ENCODE measurements at regions of chr10 and their contacts with region 1.

Region 1: DNA sequence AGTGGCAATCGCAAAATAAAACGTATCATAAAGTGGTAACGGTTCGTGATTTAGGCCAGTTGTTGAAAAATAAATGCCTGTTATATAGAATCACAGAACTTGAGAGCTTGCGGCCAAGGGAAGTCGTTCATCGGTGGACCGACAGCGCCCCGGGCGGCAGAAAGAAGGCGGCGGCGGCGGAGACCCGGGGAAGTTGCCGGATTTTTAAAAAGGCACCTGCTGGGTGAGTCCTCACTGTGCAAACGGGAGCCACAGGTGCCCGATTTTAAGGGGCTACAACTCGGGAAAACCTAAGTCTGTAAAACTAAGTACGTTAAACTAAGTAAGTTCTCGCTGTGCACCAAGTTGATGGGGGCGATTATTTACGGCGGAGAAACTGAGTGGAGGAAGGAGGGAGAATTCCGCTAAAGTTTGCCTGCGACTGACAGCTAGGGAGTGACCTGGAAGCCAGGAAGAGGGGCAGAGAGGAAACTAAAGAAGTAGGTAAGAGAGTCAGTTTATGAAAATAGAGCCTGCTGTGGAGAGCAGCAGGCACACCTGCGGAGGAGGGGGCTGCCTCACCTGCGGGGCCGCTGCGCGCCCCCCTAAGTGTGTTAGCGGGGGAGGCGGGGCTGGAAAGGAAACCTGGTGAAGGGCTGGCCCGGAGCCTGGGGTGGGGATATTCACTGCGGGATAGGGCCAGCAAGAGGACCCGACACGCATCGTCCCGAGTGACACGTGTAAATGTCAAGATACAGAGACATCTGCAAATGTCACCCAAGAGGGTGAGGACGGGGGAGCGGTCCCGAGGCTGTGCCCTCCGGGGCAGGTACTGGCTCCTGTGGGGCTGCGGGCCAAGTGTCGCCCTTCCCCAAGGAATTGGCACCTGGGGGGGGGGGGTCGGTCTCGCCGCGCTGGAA is 1.0 kb downstream of the ADAM12 start:
- DNase-seq: peak; percentile 73 to 92
- ATAC-seq: peak; percentile 73
- H3K4me3 ChIP-seq: peak overlapping the region; percentile 11 to 46
- H3K27ac ChIP-seq: no peak overlapping the region
- H3K4me1 ChIP-seq: no peaks in the 10 kb centered on the region
- H3K27me3 ChIP-seq: no peaks in the 10 kb centered on the region

Region 2: GRCh38 chr10:125982260-125982948 is 404.9 kb before region 1 on chr10:
- intact Hi-C with region 1: loop called (anchors 2 to 5 kb)
- DNase-seq: no peak
- ATAC-seq: peak; percentile 63
- H3K4me3 ChIP-seq: no peak overlapping the region
- H3K27ac ChIP-seq: no peak overlapping the region
- H3K4me1 ChIP-seq: no peaks in the 10 kb centered on the region
- H3K27me3 ChIP-seq: no peaks in the 10 kb centered on the region

Region 3: GRCh38 chr10:126041781-126042231 is 345.5 kb before region 1 on chr10:
- intact Hi-C with region 1: loop called in 1 of 2 experiments (anchors 10 kb)
- DNase-seq: peak; percentile 90 to 96
- ATAC-seq: peak; percentile 95
- H3K4me3 ChIP-seq: no peak overlapping the region
- H3K27ac ChIP-seq: peak overlapping the region in 1 of 2 donors; percentile 72
- H3K4me1 ChIP-seq: no peaks in the 10 kb centered on the region
- H3K27me3 ChIP-seq: no peaks in the 10 kb centered on the region

Region 4: DNA sequence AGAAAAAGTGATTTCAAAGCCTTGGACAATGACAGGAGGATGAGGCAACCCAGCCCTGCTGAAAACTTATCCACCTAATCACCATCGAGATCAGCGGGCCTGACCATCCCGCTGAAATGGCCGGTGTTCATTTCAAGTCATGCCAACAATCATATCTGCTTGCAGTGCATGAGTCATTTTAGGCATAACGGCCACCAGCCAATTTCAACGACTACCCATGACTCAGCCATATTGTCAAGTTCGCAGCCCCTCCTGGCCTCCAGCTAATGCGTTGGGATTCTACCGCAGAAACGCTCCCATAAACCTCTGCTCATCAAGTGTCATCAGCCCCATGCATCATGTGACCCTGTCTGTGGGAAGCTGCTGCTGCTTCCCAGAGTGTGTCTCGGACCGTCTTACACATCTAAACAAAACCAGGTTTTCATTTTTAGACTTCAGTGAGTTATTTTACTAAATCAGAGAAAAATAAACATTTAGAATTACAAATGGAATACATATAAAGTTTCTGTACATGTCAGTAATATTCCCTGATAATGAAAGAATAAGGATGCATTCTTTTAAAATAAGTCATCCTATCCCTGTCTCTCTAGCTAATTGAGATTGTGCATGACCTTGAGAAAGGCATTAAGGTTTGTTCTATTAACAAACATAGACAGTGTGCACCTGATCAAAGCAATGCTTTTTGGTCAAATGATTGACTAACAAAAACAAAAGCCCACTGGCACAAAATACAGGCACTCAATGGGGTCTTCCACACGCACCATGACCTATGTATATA is 187.9 kb before region 1 on chr10:
- intact Hi-C with region 1: loop called in 1 of 2 experiments (anchors 10 kb)
- DNase-seq: peak in 1 of 2 donors; percentile 62
- ATAC-seq: no peak
- H3K4me3 ChIP-seq: no peak overlapping the region
- H3K27ac ChIP-seq: no peak overlapping the region
- H3K4me1 ChIP-seq: peaks cover 3 to 4% of the 10 kb centered on the region in 2 donors
- H3K27me3 ChIP-seq: no peaks in the 10 kb centered on the region

Region 5: GRCh38 chr10:126349101-126349500 is 38.2 kb before region 1 on chr10:
- intact Hi-C with region 1: no loop called
- DNase-seq: no peak
- ATAC-seq: no peak
- H3K4me3 ChIP-seq: no peak overlapping the region
- H3K27ac ChIP-seq: no peak overlapping the region
- H3K4me1 ChIP-seq: no peaks in the 10 kb centered on the region
- H3K27me3 ChIP-seq: no peaks in the 10 kb centered on the region

Region 6: GRCh38 chr10:126475941-126476645 is 88.8 kb after region 1 on chr10:
- intact Hi-C with region 1: loop called in 1 of 2 experiments (anchors 10 kb)
- DNase-seq: no peak
- ATAC-seq: peak; percentile 67
- H3K4me3 ChIP-seq: no peak overlapping the region
- H3K27ac ChIP-seq: no peak overlapping the region
- H3K4me1 ChIP-seq: no peaks in the 10 kb centered on the region
- H3K27me3 ChIP-seq: no peaks in the 10 kb centered on the region

Region 7: DNA sequence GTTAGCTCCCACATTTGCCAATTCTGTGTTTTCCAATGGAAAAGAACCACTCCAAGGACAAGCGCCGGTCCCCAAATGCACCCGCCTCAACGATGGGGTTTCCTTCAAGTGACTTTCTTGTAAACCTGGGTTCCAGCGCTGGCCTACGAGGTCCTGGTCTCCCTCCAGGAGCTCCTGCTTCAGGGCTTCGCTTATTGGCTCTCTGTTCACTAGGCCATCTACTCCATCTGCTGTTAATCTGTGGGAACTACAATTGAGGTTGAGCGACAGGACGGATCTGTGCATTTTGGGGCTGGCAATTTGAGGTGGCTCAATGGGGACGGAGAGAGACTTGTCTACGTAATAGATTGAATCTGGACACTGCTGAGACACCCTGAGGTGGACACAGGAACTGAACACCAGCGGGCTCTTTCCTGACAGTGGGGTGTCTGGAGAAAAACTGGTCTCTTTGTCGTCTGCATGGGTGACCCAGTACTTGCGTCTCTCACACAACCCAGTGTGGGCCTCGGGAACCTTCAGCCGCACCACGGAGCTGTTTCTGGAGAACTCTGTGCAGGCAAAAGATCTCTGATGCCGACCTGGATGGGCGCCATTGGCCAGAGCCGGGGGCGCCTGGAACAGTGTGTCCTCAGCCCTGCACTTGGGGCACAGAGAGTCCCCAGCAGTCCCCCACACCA is 116.9 kb after region 1 on chr10:
- intact Hi-C with region 1: loop called (anchors 10 kb)
- DNase-seq: no peak
- ATAC-seq: no peak
- H3K4me3 ChIP-seq: no peak overlapping the region
- H3K27ac ChIP-seq: no peak overlapping the region
- H3K4me1 ChIP-seq: no peaks in the 10 kb centered on the region
- H3K27me3 ChIP-seq: no peaks in the 10 kb centered on the region

Region 8: GRCh38 chr10:126549344-126549743 is 162.1 kb after region 1 on chr10:
- intact Hi-C with region 1: no loop called
- DNase-seq: no peak
- ATAC-seq: no peak
- H3K4me3 ChIP-seq: no peak overlapping the region
- H3K27ac ChIP-seq: no peak overlapping the region
- H3K4me1 ChIP-seq: no peaks in the 10 kb centered on the region
- H3K27me3 ChIP-seq: no peaks in the 10 kb centered on the region